ENCODE measurements at regions of chr1 and their contacts with region 1.

Region 1: DNA sequence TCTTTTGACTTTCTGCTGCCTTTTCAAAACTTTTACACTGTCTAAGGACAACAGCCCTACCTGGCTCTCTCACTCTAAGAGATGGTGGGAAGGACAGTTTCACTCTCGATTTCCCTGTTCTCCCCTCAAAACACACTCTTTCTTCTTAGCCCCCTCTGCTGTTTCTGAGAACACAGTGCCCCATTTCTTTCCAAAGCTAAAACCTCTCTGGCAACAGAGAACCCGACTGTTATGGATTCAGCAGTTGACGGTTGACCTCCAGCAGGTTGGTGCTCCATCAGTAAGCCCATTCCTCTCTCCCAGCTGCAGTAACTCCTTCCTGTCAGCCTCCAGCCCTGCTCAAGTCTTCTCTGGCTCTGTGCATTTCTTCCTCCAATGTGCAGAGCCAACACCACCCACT is 88.2 kb upstream of the ABCD3 start:
- DNase-seq: no peak
- H3K4me3 ChIP-seq: no peak overlapping the region
- H3K27ac ChIP-seq: no peak overlapping the region
- H3K4me1 ChIP-seq: peaks cover 5% of the 10 kb centered on the region
- H3K27me3 ChIP-seq: no peaks in the 10 kb centered on the region
- CTCF ChIP-seq: peak in 1 of 3 donors; percentile 12
- EP300 ChIP-seq: no peak
- POLR2A ChIP-seq: no peak

Region 2: DNA sequence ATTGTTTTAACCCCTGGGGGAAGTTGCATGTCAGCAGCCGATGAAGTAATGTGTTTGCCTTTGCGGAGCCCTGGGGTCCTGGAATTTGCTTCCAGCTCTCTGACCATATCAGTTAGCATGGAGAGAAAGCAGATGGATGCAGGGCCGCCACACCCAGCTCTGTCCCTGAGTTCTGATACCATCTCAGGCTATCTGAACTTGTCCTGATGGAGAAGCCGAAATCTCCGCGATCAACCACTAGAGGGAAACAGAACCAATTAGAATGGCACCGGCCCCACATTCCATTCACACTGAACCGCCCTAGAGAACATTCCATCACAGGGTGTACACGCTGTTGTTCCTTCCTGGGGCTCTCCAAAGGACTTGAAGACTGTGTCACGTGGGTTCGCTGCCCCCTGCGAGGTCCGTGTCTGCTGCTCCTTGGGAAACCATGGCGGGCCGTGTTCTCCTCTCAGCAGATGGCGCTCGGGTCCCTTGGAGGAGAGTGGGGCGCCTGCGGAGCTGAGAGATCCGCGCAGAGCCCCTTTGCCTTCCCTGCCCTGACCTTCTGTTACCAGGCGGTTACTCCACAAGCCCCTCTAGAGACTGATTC is 284.4 kb before region 1 on chr1:
- intact Hi-C with region 1: loop called (anchors 5 kb)
- DNase-seq: peak; percentile 80 to 88 (median 85)
- H3K4me3 ChIP-seq: peak overlapping the region; percentile 11
- H3K27ac ChIP-seq: peak overlapping the region in 1 of 2 donors; percentile 26
- H3K4me1 ChIP-seq: peaks cover 2% of the 10 kb centered on the region
- H3K27me3 ChIP-seq: no peaks in the 10 kb centered on the region
- CTCF ChIP-seq: peak; percentile 70 to 90 (median 75)
- EP300 ChIP-seq: no peak
- POLR2A ChIP-seq: no peak

Region 3: DNA sequence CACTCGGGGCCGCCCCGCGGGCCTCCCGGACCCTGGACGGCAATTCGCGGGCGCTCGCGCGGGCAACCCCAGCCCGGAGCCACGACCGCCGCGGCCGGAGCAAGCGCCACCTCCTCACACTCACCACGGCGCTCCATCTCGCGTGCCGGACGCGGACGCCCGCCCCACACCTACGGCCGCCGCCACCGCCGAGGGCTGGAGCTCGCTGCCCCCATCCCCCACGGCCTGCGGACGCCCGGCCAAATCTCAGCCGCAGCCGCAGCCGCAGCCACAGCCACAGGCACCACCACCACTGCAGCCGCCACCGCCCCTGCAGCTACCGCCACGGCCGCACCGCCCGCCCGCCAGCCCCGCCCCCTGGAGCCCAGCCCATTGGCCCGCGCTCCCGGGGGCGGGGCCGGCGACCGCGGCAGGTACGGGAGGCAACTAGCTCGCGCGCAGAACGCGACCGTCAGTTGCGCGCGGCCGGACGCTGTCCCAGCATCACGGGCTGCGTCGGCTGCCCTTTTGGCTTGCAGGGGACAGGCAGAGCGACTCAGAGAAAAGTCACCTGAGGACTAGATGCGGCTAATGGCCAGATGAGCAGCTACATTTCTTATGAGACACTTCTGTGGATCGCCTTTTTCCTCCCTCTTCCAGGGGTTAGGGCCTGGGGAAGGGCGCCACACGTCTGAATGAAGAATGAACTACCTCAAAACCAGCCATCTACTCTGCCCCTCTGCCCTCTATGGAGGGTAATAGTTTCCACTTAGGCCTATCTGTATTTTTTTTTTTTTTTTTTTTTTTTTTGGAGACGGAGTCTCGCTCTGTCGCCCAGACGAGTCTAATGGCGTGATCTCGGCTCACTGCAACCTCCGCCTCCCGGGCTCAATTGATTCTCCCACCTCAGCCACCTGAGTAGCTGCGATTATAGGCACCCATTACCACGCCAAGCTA is 92.4 kb before region 1 on chr1 and contains the start of gene ARHGAP29:
- intact Hi-C with region 1: loop called in 3 of 4 experiments (anchors 5 to 10 kb)
- DNase-seq: peak; percentile 78 to 89 (median 81)
- H3K4me3 ChIP-seq: peak within 1 kb of the TSS; percentile 69
- H3K27ac ChIP-seq: peak within 1 kb of the TSS; percentile 19 to 40
- H3K4me1 ChIP-seq: no peaks in the 10 kb centered on the region
- H3K27me3 ChIP-seq: no peaks in the 10 kb centered on the region
- CTCF ChIP-seq: no peak
- EP300 ChIP-seq: no peak
- POLR2A ChIP-seq: peak; percentile 55
- total RNA-seq, gene ARHGAP29: 13.3 to 51.0 (median 20.5) TPM

Region 4: DNA sequence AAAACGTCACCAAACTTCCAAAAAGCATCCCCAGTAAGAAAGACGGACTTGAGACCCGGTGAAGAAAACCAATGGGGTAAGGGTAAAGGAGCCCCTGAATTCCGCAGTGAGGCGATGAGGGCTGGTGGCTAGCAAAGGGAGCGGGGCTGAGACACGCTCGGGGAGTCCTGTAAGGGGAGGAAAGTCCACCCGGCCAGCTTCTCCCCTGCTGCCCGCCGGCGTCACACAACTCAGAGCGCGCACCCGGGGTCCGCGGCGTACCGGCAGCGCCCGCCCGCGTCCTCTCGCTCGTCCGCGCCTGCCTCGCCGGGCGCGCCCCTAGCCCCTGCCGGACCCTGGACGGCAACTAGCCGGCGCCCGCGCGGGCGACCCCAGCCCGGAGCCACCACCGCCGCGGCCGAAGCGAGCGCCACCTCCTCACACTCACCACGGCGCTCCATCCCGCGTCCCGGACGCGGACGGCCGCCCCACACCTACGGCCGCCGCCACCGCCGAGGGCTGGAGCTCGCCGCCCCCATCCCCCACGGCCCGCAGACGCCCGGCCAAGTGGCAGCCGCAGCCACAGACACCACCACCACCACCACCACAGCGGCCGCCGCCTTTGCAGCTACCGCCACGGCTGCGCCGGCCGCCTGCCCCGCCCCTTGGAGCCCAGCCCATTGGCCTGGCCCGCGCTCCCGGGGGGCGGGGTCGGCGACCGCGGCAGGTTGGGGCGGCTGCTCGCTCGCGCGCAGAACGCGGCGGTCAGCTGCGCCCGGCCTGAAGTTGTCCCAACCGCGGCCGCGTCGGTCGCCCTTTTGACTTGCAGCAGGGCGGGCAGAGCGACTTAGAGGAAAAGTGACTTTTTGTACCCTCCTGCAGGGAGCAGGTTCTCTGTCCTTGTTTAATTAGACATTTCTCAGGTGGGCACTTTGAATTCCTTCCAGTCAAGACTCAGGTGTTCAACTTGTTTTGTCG is 82.6 kb before region 1 on chr1:
- intact Hi-C with region 1: loop called in 1 of 4 experiments (anchors 10 kb)
- DNase-seq: peak; percentile 66 to 82 (median 71)
- H3K4me3 ChIP-seq: peak overlapping the region; percentile 49
- H3K27ac ChIP-seq: peak overlapping the region; percentile 23 to 60
- H3K4me1 ChIP-seq: peaks cover 5% of the 10 kb centered on the region
- H3K27me3 ChIP-seq: no peaks in the 10 kb centered on the region
- CTCF ChIP-seq: no peak
- EP300 ChIP-seq: no peak
- POLR2A ChIP-seq: peak; percentile 41

Region 5: GRCh38 chr1:94669203-94669602 is 339.2 kb after region 1 on chr1:
- intact Hi-C with region 1: no loop called
- DNase-seq: no peak
- H3K4me3 ChIP-seq: no peak overlapping the region
- H3K27ac ChIP-seq: no peak overlapping the region
- H3K4me1 ChIP-seq: peaks cover 4% of the 10 kb centered on the region
- H3K27me3 ChIP-seq: no peaks in the 10 kb centered on the region
- CTCF ChIP-seq: no peak
- EP300 ChIP-seq: no peak
- POLR2A ChIP-seq: no peak